ENCODE measurements at regions of chr6 and their contacts with region 1.

Region 1: GRCh38 chr6:19538077-19538512 is 299.1 kb upstream of the ID4 start:
- DNase-seq: peak; percentile 19
- H3K4me3 ChIP-seq: no peak overlapping the region
- H3K27ac ChIP-seq: no peak overlapping the region
- H3K4me1 ChIP-seq: no peaks in the 10 kb centered on the region
- H3K27me3 ChIP-seq: no peaks in the 10 kb centered on the region
- CTCF ChIP-seq: no peak
- EP300 ChIP-seq: no peak
- POLR2A ChIP-seq: no peak

Region 2: DNA sequence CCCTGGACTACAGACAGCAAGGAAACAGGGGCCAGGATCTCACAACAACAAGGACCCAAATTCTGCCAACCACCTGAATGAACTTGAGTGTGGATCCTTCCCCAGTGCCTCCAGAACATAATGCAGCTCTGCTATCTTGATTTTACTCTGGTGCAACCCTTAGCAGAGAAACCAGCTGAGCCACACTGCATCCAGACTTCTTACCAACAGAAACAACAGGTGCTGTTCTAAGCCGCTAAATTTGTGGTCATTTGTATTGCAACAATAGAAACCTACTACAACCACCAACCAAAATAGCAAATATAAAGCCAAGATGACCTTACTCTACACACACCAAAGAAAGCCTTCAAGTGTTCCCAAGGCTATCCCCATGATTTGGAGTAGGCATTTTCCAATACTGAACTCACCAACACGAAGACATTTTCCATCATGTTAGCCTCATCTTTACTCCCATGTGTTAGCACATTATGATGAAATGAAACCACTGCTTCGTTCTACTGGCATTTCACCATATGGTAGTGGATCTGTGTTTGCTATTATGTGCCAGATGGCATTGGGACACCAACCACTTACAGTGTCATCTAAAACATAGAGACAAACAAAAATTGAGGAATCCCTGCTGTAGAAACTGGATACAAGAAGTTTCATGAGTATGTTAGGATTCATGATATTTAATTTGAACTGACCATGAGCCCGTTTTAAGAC is 49.3 kb after region 1 on chr6:
- in situ Hi-C with region 1: no loop called
- intact Hi-C with region 1: no loop called
- DNase-seq: no peak
- H3K4me3 ChIP-seq: no peak overlapping the region
- H3K27ac ChIP-seq: no peak overlapping the region
- H3K4me1 ChIP-seq: no peaks in the 10 kb centered on the region
- H3K27me3 ChIP-seq: no peaks in the 10 kb centered on the region
- CTCF ChIP-seq: no peak
- EP300 ChIP-seq: no peak
- POLR2A ChIP-seq: no peak

Region 3: DNA sequence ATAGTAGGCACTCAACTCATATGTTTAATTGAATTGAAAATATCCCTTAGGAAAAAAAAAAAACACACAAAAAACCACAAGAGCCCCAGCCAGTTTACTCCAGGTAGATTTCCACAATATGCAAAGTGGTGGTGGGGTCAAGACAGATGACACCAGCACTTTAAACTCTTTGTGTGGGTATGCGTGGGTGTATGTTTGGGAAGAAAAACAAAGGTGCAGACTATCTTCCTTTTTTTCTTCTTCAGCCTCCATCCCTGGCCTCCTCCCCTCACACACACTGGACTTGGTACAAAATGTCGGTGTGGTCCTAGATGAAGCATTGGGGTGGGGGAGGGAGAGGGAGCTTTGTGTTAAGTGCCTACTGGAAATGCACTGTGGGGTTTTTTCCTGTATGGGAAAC is 954.0 kb after region 1 on chr6:
- in situ Hi-C with region 1: no loop called
- intact Hi-C with region 1: loop called (anchors 5 kb)
- DNase-seq: no peak
- H3K4me3 ChIP-seq: no peak overlapping the region
- H3K27ac ChIP-seq: no peak overlapping the region
- H3K4me1 ChIP-seq: no peaks in the 10 kb centered on the region
- H3K27me3 ChIP-seq: no peaks in the 10 kb centered on the region
- CTCF ChIP-seq: no peak
- EP300 ChIP-seq: no peak
- POLR2A ChIP-seq: no peak